ENCODE measurements at regions of chr7 and their contacts with region 1.

Region 1: GRCh38 chr7:119175911-119176627 is 951.6 kb downstream of the ANKRD7 start:
- DNase-seq: peak; percentile 19
- H3K4me3 ChIP-seq: no peak overlapping the region
- H3K27ac ChIP-seq: no peak overlapping the region
- H3K4me1 ChIP-seq: no peaks in the 10 kb centered on the region
- H3K27me3 ChIP-seq: no peaks in the 10 kb centered on the region
- CTCF ChIP-seq: peak; percentile 24 to 70 (median 54)
- POLR2A ChIP-seq: no peak

Region 2: GRCh38 chr7:118918556-118918955 is 257.5 kb before region 1 on chr7:
- intact Hi-C with region 1: loop called (anchors 10 kb)
- DNase-seq: no peak
- H3K4me3 ChIP-seq: no peak overlapping the region
- H3K27ac ChIP-seq: no peak overlapping the region
- H3K4me1 ChIP-seq: no peaks in the 10 kb centered on the region
- H3K27me3 ChIP-seq: no peaks in the 10 kb centered on the region
- CTCF ChIP-seq: peak in 1 of 4 experiments; percentile 43
- POLR2A ChIP-seq: no peak